ENCODE measurements at regions of chr3 and their contacts with region 1.

Region 1: DNA sequence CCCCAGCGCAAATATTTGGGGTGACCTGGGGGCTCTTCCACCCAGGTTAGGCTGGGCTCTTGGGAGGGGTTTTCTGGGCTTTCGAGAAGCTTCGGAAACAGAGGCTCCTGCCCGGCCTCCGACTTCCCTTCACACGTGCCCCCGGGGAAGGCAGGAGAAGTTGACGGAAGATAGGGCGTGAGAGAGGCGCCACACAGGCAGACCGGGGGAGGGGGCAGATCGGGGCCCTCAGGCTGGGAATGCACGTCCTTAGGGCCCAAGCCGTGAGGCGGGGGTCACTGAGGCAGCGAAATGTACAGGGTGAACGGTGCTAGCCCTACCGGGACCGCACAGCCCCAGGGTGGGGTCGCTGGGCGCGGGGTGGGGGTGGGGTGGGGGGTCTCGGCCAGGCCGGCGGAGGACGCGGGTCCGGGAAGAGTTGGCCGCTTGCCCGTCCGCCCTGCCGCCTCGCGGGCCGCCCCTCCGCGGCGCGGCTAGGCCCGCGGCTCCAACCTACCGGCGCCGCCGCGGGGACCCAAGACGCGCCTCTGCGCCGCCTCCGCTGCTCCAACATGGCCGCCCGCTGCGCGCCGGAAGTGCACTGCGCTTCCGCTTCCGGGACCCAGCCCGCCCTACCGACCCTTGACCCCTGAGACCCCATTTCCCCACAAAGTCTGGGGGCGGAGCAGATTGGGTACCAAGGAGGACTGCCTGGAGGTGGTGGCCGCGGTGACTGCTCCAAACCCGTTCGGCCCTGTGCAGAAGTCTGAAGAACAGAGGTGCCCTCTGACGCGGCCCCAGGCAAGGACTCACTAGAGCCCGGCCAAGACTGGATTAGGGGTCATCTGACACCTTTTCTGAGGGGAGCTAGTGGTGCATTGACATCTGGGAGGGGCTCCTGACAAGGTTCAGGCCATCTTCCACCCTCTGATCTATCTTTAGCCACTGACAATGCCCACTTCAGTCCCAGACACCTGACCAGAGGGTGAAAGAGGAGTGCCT is at the start of gene CCDC71:
- DNase-seq: peak; percentile 79 to 83 (median 82)
- ATAC-seq: peak; percentile 86
- H3K4me3 ChIP-seq: peak within 1 kb of the TSS; percentile 98
- H3K4me1 ChIP-seq: peaks cover 20% of the 10 kb centered on the region
- CTCF ChIP-seq: no peak
- total RNA-seq, gene CCDC71: 15.2 to 20.7 (median 19.9) TPM

Region 2: GRCh38 chr3:48528754-48529153 is 637.3 kb before region 1 on chr3:
- intact Hi-C with region 1: no loop called
- DNase-seq: no peak
- ATAC-seq: no peak
- H3K4me3 ChIP-seq: no peak overlapping the region
- H3K4me1 ChIP-seq: no peaks in the 10 kb centered on the region
- CTCF ChIP-seq: no peak

Region 3: GRCh38 chr3:49217688-49218470 is 51.8 kb after region 1 on chr3:
- intact Hi-C with region 1: no loop called
- DNase-seq: peak in 1 of 3 donors; percentile 3
- ATAC-seq: no peak
- H3K4me3 ChIP-seq: no peak overlapping the region
- H3K4me1 ChIP-seq: peaks cover 4% of the 10 kb centered on the region
- CTCF ChIP-seq: no peak

Region 4: DNA sequence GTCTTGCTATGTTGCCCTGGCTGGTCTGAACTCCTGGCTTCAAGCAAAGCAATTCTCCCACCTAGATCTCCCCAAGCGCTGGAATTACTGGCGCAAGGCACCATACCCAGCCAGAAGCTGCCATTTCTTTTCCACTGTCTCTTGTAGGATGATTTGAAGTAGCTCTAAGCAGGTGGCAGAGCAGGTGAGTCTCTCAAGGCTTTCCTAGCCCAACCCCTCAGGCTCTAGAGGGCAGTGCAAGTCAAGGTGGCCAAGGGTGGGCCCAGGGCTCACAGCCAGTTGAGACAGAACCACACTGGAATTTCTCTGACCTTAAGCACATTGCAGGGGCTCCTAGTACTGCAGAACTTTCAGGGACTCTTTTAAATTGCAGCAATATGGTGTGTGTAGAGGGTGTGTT is 288.4 kb after region 1 on chr3:
- intact Hi-C with region 1: loop called in 1 of 2 experiments (anchors 10 kb)
- DNase-seq: peak in 1 of 3 donors; percentile 29
- ATAC-seq: peak; percentile 61
- H3K4me3 ChIP-seq: no peak overlapping the region
- H3K4me1 ChIP-seq: no peaks in the 10 kb centered on the region
- CTCF ChIP-seq: no peak